Psoas muscle (tissue), 8 donors: ENCODE measurements at regions of chr6 and their contacts with region 1.

Region 1: DNA sequence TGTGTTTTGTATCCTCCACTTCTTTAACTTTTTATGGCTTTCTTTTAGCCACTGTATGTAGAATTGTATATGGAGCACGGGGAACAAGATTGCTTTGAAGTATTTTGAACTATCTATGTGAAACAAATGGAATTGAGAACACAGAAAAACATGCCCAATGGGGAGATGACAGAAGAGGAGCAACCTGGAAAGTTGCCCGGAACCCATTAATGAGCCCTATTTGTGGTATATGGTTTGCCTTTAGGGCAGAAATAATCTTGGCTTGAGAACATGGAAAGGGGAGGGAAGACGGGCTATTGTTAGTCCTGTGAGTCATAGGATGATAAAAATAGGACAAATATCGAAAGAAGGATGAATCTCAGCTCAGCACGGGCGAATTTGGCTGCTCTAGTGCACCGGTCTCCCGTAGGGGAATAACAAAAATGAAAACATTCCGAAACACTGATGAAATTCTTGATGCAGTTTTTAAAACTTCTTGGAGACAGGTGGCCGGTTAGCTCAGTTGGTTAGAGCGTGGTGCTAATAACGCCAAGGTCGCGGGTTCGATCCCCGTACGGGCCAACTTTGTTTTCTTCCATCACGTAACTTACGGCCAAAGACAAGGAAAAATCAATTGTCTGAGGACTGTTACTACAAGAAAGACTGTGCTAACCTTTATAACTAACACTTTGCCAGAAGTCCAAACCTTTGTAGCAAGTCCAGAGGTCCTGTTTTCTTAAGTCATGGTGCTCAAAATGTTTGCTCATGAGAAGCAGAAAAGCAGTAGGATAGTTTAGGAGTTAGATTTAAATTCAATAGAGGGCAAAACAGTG is 15.7 kb downstream of the HMGN4 start:
- DNase-seq: peak; percentile 77 to 81
- ATAC-seq: peak; percentile 81 to 91 (median 84)
- H3K4me3 ChIP-seq: peak overlapping the region; percentile 67
- H3K27ac ChIP-seq: peak overlapping the region; percentile 74
- H3K4me1 ChIP-seq: peaks cover 7% of the 10 kb centered on the region
- H3K27me3 ChIP-seq: no peaks in the 10 kb centered on the region
- CTCF ChIP-seq: no peak

Region 2: GRCh38 chr6:26312501-26313390 is 241.1 kb before region 1 on chr6:
- intact Hi-C with region 1: loop called in 1 of 2 experiments (anchors 5 kb)
- DNase-seq: peak; percentile 62 to 84
- ATAC-seq: peak; percentile 84 to 88 (median 85)
- H3K4me3 ChIP-seq: peak overlapping the region; percentile 71
- H3K27ac ChIP-seq: peak overlapping the region; percentile 81
- H3K4me1 ChIP-seq: no peaks in the 10 kb centered on the region
- H3K27me3 ChIP-seq: no peaks in the 10 kb centered on the region
- CTCF ChIP-seq: no peak

Region 3: DNA sequence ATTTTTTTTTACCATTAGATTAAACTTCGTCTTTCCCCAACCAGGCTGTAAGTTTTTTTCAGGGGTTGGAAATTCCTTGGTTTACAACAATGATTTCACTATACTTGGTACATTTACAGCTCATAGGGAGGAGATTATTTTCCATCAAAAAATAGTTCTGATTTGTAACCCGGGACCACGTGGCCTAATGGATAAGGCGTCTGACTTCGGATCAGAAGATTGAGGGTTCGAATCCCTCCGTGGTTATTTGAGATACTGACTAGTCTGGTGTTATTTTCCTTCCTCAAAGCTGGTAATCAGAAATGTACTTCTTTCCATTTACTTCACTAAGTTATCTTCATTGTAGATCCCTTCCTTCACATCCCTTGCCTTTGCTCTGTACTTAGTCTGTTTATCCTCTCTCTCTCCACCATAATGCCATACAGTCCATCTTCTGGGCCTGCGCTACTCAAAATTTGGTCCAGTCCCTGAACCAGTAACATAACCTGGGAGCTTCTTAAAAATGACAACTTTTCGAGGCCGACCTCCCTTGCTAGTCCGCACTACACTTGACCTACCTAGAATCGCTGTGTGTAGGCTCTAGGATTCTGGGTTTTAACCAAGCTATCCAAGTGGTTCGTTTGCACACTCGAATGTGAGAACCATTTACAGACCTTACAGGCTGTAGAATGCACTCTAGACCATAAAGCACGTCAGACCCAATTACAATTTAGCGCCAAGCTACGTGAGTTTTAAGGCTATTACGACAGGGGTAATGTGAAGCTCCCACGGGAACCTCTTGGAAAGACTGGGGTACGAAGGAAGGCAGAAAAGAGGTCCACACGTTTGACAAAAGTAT is 231.0 kb before region 1 on chr6:
- intact Hi-C with region 1: loop called in 1 of 2 experiments (anchors 5 kb)
- DNase-seq: no peak
- ATAC-seq: peak; percentile 76 to 80 (median 79)
- H3K4me3 ChIP-seq: peak overlapping the region; percentile 74
- H3K27ac ChIP-seq: peak overlapping the region; percentile 69
- H3K4me1 ChIP-seq: no peaks in the 10 kb centered on the region
- H3K27me3 ChIP-seq: peaks cover 1 to 15% (median 2%) of the 10 kb centered on the region in 3 donors
- CTCF ChIP-seq: no peak

Region 4: GRCh38 chr6:26521600-26522391 is 32.0 kb before region 1 on chr6:
- intact Hi-C with region 1: loop called in 1 of 2 experiments (anchors 1 kb)
- DNase-seq: peak; percentile 89 to 93
- ATAC-seq: peak; percentile 92 to 94 (median 93)
- H3K4me3 ChIP-seq: peak overlapping the region; percentile 66
- H3K27ac ChIP-seq: peak overlapping the region; percentile 90
- H3K4me1 ChIP-seq: peaks cover 26% of the 10 kb centered on the region
- H3K27me3 ChIP-seq: no peaks in the 10 kb centered on the region
- CTCF ChIP-seq: peak; percentile 39

Region 5: GRCh38 chr6:26537846-26538571 is 15.8 kb before region 1 on chr6 and contains the start of gene HMGN4:
- intact Hi-C with region 1: loop called in 1 of 2 experiments (anchors 2 kb)
- DNase-seq: peak; percentile 84 to 91
- ATAC-seq: peak; percentile 81 to 86 (median 83)
- H3K4me3 ChIP-seq: peak within 1 kb of the TSS; percentile 81
- H3K27ac ChIP-seq: peak within 1 kb of the TSS; percentile 86
- H3K4me1 ChIP-seq: peaks cover 24% of the 10 kb centered on the region
- H3K27me3 ChIP-seq: no peaks in the 10 kb centered on the region
- CTCF ChIP-seq: no peak
- total RNA-seq, gene HMGN4: 18.5 to 38.4 (median 27.8) TPM

Region 6: GRCh38 chr6:26568601-26569432 is 15.0 kb after region 1 on chr6:
- intact Hi-C with region 1: loop called in 1 of 2 experiments (anchors 2 kb)
- DNase-seq: peak; percentile 87 to 93
- ATAC-seq: peak; percentile 79 to 91 (median 83)
- H3K4me3 ChIP-seq: peak overlapping the region; percentile 70
- H3K27ac ChIP-seq: peak overlapping the region; percentile 43
- H3K4me1 ChIP-seq: peaks cover 7% of the 10 kb centered on the region
- H3K27me3 ChIP-seq: no peaks in the 10 kb centered on the region
- CTCF ChIP-seq: no peak